Right lobe of liver (tissue), 6 donors: ENCODE measurements at regions of chr20 and their contacts with region 1.

Region 1: DNA sequence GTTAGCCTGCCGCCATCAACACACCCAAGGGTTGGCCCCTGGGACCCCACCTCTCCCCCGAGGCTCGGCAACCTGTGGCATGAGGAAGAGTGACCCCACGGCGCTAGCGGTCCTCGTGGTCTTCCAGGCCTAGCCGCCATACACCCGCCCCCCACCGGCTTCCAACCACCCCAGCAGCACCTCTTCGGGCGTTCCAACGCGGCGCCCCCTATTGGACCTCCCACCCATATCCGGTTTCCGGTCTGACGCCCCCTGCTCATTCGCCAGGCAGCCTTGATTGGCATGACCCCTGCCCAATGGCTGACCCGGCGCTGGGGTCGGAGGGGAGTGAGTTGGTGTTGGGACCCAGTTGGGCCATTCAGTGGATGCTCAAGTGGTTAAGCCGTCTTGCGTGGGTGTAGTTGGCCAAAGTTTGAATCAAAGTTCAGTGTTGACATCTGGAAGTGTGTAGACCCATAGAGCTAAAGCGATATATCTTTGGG is at the start of gene GNAS-AS1:
- DNase-seq: peak in 2 of 3 donors; percentile 42 to 71
- ATAC-seq: peak; percentile 16 to 50 (median 40)
- H3K4me3 ChIP-seq: peak within 1 kb of the TSS; percentile 9 to 36 (median 21)
- H3K27ac ChIP-seq: no peak within 1 kb of the TSS
- H3K4me1 ChIP-seq: peaks cover 0 to 3% (median 0%) of the 10 kb centered on the region in 4 donors
- H3K27me3 ChIP-seq: no peaks in the 10 kb centered on the region
- CTCF ChIP-seq: no peak
- POLR2A ChIP-seq: no peak
- total RNA-seq, gene GNAS-AS1: 0.23 to 0.37 (median 0.27) TPM in 3 of 6 experiments, not detected in the others

Region 2: GRCh38 chr20:58471193-58472164 is 379.3 kb before region 1 on chr20:
- intact Hi-C with region 1: loop called in 1 of 2 experiments (anchors 10 kb)
- DNase-seq: no peak
- ATAC-seq: peak in 3 of 4 donors; percentile 17 to 44 (median 36)
- H3K4me3 ChIP-seq: no peak overlapping the region
- H3K27ac ChIP-seq: no peak overlapping the region
- H3K4me1 ChIP-seq: no peaks in the 10 kb centered on the region
- H3K27me3 ChIP-seq: no peaks in the 10 kb centered on the region
- CTCF ChIP-seq: no peak
- POLR2A ChIP-seq: no peak

Region 3: GRCh38 chr20:58481481-58482021 is 369.2 kb before region 1 on chr20:
- intact Hi-C with region 1: loop called (anchors 10 kb)
- DNase-seq: peak; percentile 58 to 70 (median 68)
- ATAC-seq: peak; percentile 92 to 98 (median 94)
- H3K4me3 ChIP-seq: peak overlapping the region in 1 of 3 donors; percentile 30
- H3K27ac ChIP-seq: no peak overlapping the region
- H3K4me1 ChIP-seq: no peaks in the 10 kb centered on the region
- H3K27me3 ChIP-seq: no peaks in the 10 kb centered on the region
- CTCF ChIP-seq: peak; percentile 62 to 75 (median 70)
- POLR2A ChIP-seq: no peak